ENCODE measurements at regions of chr22 and their contacts with region 1.

Region 1: DNA sequence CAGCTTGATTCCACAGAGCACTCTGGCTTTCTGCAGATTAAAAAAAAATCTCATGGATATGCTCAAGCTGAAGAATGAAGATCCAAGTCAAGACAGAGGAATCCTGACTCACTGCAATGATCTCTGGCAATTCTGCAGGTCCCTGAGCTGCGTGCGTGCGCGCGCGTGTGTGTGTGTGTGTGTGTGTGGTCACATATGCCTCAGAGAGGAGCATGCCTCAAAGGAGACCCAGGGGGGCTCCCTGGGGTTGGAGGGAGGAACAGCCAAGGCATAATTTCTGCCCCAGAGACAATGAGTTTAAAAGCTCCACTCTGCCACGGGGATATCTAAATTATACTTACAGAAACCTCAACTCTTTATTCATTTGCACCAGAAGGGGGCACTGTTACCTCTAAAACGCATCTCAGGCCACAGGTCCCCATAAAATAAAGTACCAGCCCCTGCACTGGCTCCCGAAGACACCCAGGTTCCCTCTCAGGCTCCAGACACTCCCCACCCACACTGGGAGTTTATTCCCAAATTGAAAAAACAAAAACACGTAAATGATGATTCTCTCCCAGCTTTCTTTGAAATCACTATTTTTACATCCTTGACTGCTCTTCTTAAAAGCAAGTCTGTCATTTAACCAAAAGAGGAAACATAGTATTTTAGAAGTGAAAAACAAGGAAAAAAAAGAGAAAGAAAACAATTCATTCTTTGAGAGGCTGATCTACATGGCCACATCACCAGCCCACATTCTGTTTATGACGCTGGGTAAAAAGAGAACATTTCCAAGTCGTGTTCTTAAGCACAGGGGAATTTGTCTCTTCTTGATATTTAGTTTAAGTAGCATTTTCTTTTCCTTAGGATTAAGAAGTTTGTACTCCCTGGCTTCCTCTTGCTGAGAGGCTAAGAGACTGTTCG is 401.0 kb downstream of the LARGE1 start:
- DNase-seq: peak in 1 of 2 experiments; percentile 54
- H3K4me3 ChIP-seq: no peak overlapping the region
- H3K27ac ChIP-seq: no peak overlapping the region
- H3K4me1 ChIP-seq: no peaks in the 10 kb centered on the region; a peak in 2 of 7 replicates
- H3K27me3 ChIP-seq: no peaks in the 10 kb centered on the region
- CTCF ChIP-seq: peak in 2 of 3 experiments; percentile 55 to 64; a peak in 3 of 4 replicates
- EP300 ChIP-seq: no peak
- POLR2A ChIP-seq: no peak
- RAD21 ChIP-seq: peak; percentile 79 to 84

Region 2: GRCh38 chr22:33302049-33302545 is 217.2 kb before region 1 on chr22:
- CTCF ChIA-PET with region 1: interaction called, 19 read pairs
- POLR2A ChIA-PET with region 1: no interaction called
- DNase-seq: peak; percentile 64 to 97
- H3K4me3 ChIP-seq: no peak overlapping the region
- H3K27ac ChIP-seq: no peak overlapping the region
- H3K4me1 ChIP-seq: no peaks in the 10 kb centered on the region
- H3K27me3 ChIP-seq: no peaks in the 10 kb centered on the region
- CTCF ChIP-seq: peak; percentile 91 to 96 (median 93)
- EP300 ChIP-seq: no peak
- POLR2A ChIP-seq: no peak
- RAD21 ChIP-seq: peak; percentile 98 to 99

Region 3: GRCh38 chr22:33467620-33468095 is 51.7 kb before region 1 on chr22:
- CTCF ChIA-PET with region 1: no interaction called
- POLR2A ChIA-PET with region 1: no interaction called
- DNase-seq: no peak
- H3K4me3 ChIP-seq: no peak overlapping the region
- H3K27ac ChIP-seq: no peak overlapping the region
- H3K4me1 ChIP-seq: peaks cover 0 to under 1% (median 0%) of the 10 kb centered on the region in 4 experiments; a peak in 1 of 7 replicates
- H3K27me3 ChIP-seq: no peaks in the 10 kb centered on the region
- CTCF ChIP-seq: peak in 2 of 3 experiments; percentile 31 to 34; a peak in 2 of 4 replicates
- EP300 ChIP-seq: no peak
- POLR2A ChIP-seq: no peak
- RAD21 ChIP-seq: peak; percentile 39 to 47

Region 4: DNA sequence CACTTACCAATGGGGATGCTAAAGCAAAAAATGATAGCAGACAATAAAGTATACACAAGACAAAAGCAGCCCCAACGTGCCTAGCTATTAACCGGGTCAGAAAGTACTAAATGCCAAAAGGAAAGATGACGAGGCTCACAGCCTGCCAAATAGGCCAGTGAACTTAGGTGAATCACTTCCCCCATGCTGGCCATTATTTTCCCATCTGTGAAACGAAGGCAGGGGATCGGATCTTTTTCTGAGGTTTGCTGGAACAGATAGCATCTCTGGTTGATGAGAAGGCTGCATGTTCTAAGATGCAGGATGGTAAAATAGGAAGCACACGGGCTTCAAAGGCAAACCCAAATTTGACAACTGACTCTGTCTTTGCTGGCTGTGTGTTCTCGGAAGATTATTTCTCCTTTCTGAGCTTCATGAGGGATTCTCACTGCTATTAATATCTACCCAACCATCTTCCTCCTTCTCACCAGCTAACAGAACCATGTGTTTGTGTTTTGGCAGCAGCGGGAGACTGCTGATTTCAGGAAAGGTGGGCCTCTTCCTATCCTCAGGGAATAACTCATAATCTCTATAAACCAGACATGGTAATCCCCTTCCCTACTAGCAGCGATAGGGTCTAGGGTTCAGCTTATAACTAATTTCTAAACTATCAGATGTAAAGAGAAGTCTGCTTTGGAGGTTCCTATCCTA is 10.2 kb after region 1 on chr22:
- CTCF ChIA-PET with region 1: interaction called, 26 read pairs
- POLR2A ChIA-PET with region 1: no interaction called
- DNase-seq: no peak
- H3K4me3 ChIP-seq: no peak overlapping the region
- H3K27ac ChIP-seq: no peak overlapping the region
- H3K4me1 ChIP-seq: peaks cover 0 to 8% (median 2%) of the 10 kb centered on the region in 4 experiments; a peak in 3 of 7 replicates
- H3K27me3 ChIP-seq: no peaks in the 10 kb centered on the region
- CTCF ChIP-seq: no peak
- EP300 ChIP-seq: no peak
- POLR2A ChIP-seq: no peak
- RAD21 ChIP-seq: no peak

Region 5: GRCh38 chr22:33563220-33563964 is 44.1 kb after region 1 on chr22:
- CTCF ChIA-PET with region 1: interaction called, 10 read pairs
- POLR2A ChIA-PET with region 1: no interaction called
- DNase-seq: no peak
- H3K4me3 ChIP-seq: no peak overlapping the region
- H3K27ac ChIP-seq: no peak overlapping the region
- H3K4me1 ChIP-seq: peaks cover 0 to 4% (median 1%) of the 10 kb centered on the region in 4 experiments; a peak in 3 of 7 replicates
- H3K27me3 ChIP-seq: no peaks in the 10 kb centered on the region
- CTCF ChIP-seq: no peak
- EP300 ChIP-seq: no peak
- POLR2A ChIP-seq: no peak
- RAD21 ChIP-seq: no peak

Region 6: GRCh38 chr22:33579448-33580093 is 60.2 kb after region 1 on chr22:
- CTCF ChIA-PET with region 1: interaction called, 58 read pairs
- POLR2A ChIA-PET with region 1: no interaction called
- DNase-seq: peak; percentile 53 to 94
- H3K4me3 ChIP-seq: no peak overlapping the region
- H3K27ac ChIP-seq: no peak overlapping the region
- H3K4me1 ChIP-seq: no peaks in the 10 kb centered on the region
- H3K27me3 ChIP-seq: no peaks in the 10 kb centered on the region
- CTCF ChIP-seq: peak; percentile 54 to 97 (median 94)
- EP300 ChIP-seq: no peak
- POLR2A ChIP-seq: no peak
- RAD21 ChIP-seq: peak; percentile 88 to 94